A673 (cell line): ENCODE measurements at regions of chr9 and their contacts with region 1.

Region 1: DNA sequence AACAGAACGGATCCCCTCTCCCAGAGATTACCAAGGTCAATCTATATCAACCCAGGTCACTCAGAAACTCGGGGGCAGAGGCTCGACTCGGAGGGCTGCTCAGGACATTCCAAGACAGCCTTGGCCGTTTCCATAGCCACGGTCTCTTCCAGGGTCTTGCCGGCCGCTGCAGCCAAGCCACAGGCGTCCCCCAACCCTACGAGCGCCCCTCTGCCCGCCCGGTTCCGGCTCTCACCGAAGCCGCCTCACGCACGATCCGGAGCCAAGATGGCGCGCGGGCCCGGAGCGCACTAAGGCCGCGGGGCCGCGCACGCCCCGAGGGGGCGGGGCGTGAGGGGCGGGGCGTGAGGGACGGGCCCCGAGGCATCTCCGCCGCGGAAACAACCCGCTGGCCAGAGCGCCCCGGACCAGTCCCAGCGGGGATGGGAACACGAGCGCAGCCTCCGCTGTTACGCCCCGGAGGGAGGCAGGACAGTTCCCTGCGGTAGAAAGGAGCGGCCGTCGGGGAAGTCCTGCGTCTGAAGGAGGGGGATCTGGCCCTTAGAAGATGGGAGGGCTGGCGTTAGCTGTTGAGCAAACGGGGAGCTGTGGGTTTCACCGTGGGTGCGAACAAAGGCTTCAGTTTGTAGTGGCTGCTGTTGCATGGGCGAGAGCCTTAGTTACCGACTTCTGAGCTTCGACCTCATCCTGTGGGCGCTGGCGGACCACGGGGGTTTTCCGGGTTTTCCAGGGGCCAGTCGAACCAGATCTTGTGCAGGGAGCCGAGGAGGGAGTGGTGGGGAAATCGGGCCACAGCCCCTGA is at the start of gene RPP25L:
- DNase-seq: peak; percentile 93
- H3K4me3 ChIP-seq: peak within 1 kb of the TSS; percentile 91
- H3K27ac ChIP-seq: peak within 1 kb of the TSS; percentile 96
- H3K4me1 ChIP-seq: peaks cover 3% of the 10 kb centered on the region
- H3K27me3 ChIP-seq: no peaks in the 10 kb centered on the region
- CTCF ChIP-seq: no peak
- total RNA-seq, gene RPP25L: 19.7 and 31.6 TPM in 2 replicates

Region 2: DNA sequence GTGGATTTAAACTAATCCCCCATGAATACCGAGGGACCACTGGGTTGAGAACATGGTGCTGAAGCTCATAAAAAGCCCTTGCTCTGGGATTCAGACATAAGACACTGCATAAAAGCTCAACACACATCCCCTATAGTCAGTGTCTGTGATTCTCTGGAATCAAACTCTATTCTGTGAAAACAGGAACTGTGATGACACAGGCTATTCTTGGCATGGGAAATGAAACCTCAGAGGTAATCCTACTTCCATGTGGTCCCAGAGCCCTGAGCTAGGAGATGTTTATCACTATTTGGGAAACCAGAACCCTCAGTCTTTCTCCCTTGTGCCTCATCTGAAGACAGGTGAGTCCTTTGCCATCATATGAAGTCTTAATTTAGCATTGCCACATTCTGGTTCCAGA is 952.1 kb before region 1 on chr9:
- CTCF ChIA-PET with region 1: no interaction called
- POLR2A ChIA-PET with region 1: no interaction called
- intact Hi-C with region 1: no loop called
- DNase-seq: no peak
- H3K4me3 ChIP-seq: no peak overlapping the region
- H3K27ac ChIP-seq: no peak overlapping the region
- H3K4me1 ChIP-seq: no peaks in the 10 kb centered on the region
- H3K27me3 ChIP-seq: peaks cover 26% of the 10 kb centered on the region
- CTCF ChIP-seq: no peak

Region 3: GRCh38 chr9:34437006-34437925 is 174.8 kb before region 1 on chr9:
- CTCF ChIA-PET with region 1: no interaction called
- POLR2A ChIA-PET with region 1: no interaction called
- intact Hi-C with region 1: no loop called
- DNase-seq: peak; percentile 81
- H3K4me3 ChIP-seq: no peak overlapping the region
- H3K27ac ChIP-seq: no peak overlapping the region
- H3K4me1 ChIP-seq: peaks cover 25% of the 10 kb centered on the region
- H3K27me3 ChIP-seq: no peaks in the 10 kb centered on the region
- CTCF ChIP-seq: peak; percentile 88

Region 4: DNA sequence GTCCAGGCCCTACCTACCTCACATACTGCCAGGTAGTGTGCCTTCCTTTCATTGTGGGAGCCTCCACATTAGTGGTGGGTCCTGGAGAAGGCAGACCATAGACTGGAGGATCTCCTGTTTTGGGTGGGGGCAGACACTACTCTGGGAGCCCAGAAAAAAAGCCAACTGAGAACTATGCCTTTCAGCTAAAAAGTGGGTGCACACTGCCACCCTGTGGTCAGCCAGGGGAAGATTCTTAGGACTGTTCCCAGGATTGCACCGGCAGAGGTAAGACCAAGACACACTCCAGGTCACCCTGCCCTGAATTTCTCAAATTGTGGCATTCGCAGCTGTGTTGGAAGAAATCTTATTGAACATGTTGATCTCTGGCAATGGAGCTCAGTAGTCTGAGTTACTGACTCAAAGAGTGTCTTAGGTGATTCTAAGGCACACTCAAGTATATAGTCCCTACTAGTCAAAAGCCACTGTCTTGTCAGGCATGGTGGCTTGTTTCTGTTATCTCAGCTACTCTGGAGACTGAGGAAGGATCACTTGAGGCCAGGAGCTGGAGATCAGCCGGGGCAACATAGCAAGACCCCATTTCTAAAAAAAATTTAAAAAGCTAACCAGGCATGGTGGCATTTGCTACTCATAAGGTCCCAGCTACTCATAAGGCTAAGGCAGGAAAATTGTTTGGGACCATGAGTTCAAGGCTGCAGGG is 22.0 kb after region 1 on chr9:
- CTCF ChIA-PET with region 1: interaction called, 5 read pairs
- POLR2A ChIA-PET with region 1: no interaction called
- intact Hi-C with region 1: loop called (anchors 2 kb)
- DNase-seq: peak; percentile 78
- H3K4me3 ChIP-seq: no peak overlapping the region
- H3K27ac ChIP-seq: no peak overlapping the region
- H3K4me1 ChIP-seq: peaks cover 11% of the 10 kb centered on the region
- H3K27me3 ChIP-seq: peaks cover 22% of the 10 kb centered on the region
- CTCF ChIP-seq: peak; percentile 93

Region 5: GRCh38 chr9:35229066-35229778 is 617.2 kb after region 1 on chr9:
- CTCF ChIA-PET with region 1: no interaction called
- POLR2A ChIA-PET with region 1: no interaction called
- intact Hi-C with region 1: no loop called
- DNase-seq: no peak
- H3K4me3 ChIP-seq: no peak overlapping the region
- H3K27ac ChIP-seq: no peak overlapping the region
- H3K4me1 ChIP-seq: no peaks in the 10 kb centered on the region
- H3K27me3 ChIP-seq: no peaks in the 10 kb centered on the region
- CTCF ChIP-seq: no peak